ENCODE measurements at regions of chr20 and their contacts with region 1.

Region 1: GRCh38 chr20:51417250-51418136 is 125.0 kb downstream of the NFATC2 start:
- DNase-seq: no peak
- H3K4me3 ChIP-seq: no peak overlapping the region
- H3K27ac ChIP-seq: no peak overlapping the region
- H3K4me1 ChIP-seq: peaks cover under 1% of the 10 kb centered on the region; the same call in 1 of the 2 replicates
- H3K27me3 ChIP-seq: no peaks in the 10 kb centered on the region
- CTCF ChIP-seq: no peak

Region 2: DNA sequence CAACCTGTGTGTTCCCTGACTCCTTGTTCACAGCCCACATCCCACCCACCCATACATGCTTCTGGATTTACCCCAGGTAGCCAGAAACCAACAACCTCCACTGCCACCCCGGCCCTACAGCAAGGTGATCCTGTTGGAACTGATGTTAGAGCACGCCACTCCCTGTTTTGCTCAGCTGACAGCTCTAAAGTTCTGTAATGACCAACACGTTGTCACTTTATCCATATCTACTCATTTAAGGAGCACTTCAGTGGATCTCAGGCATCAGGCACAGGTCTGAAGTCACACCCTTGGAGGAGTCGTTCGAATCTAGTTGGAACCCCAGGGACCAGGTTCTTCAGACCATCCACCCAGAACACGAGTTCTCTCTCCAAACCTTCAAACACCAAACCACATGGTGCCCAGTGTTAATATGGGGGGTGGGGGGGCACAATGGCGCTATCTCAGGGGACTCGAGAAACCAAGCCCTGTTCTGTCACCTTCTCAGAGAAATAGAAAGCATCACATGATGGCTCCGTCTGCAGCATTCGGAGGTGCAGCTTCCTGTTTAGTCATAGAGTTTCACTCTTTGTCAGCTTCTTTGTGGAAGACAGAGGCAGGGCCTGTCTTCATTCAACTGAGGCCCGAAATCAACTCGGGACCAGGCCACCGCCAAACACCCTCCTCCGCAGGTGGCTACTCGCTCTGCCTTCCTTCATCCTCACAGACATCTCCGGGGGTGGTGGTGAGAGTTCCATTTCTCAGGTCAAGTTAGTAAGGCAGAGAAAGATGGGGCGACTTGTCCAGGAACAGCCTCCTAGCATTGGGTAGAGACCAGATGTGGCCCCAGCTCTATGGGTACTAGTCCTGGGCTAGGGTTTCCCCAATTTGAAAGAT is 17.2 kb before region 1 on chr20:
- CTCF ChIA-PET with region 1: no interaction called
- POLR2A ChIA-PET with region 1: no interaction called
- intact Hi-C with region 1: no loop called
- DNase-seq: no peak
- H3K4me3 ChIP-seq: no peak overlapping the region
- H3K27ac ChIP-seq: no peak overlapping the region
- H3K4me1 ChIP-seq: peaks cover 10% of the 10 kb centered on the region; the same call in 1 of the 2 replicates
- H3K27me3 ChIP-seq: no peaks in the 10 kb centered on the region
- CTCF ChIP-seq: no peak

Region 3: GRCh38 chr20:51487565-51488268 is 70.2 kb after region 1 on chr20:
- CTCF ChIA-PET with region 1: no interaction called
- POLR2A ChIA-PET with region 1: no interaction called
- intact Hi-C with region 1: no loop called
- DNase-seq: peak; percentile 81 to 93
- H3K4me3 ChIP-seq: peak overlapping the region; percentile 57
- H3K27ac ChIP-seq: peak overlapping the region; percentile 92
- H3K4me1 ChIP-seq: peaks cover 24% of the 10 kb centered on the region
- H3K27me3 ChIP-seq: no peaks in the 10 kb centered on the region
- CTCF ChIP-seq: no peak; the same call in 1 of the 2 replicates

Region 4: DNA sequence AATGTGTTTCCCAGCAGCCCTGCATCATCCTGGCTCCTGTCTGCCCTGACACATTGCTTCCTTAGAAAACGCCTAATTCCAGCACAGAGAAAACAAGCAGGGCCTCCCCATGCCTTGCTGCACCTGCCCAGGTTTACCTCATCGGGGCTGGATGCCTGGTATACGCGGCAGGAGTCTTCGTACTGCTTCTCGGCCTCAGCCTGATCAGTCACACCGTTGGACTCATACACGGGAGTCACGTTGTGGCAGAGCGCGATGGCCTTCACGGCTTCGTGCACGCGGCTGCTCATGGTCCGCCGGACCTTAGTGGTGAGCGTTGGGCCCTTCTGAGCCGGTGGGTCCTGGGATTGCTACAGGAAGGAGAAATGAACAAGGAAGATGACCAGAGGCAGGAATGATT is 239.3 kb after region 1 on chr20:
- CTCF ChIA-PET with region 1: interaction called, 12 read pairs
- POLR2A ChIA-PET with region 1: no interaction called
- intact Hi-C with region 1: no loop called
- DNase-seq: no peak
- H3K4me3 ChIP-seq: no peak overlapping the region
- H3K27ac ChIP-seq: no peak overlapping the region
- H3K4me1 ChIP-seq: peaks cover 28% of the 10 kb centered on the region
- H3K27me3 ChIP-seq: no peaks in the 10 kb centered on the region
- CTCF ChIP-seq: no peak